Activated CD4-positive, alpha-beta T cell treated with anti-CD3 and anti-CD28 coated beads, Interleukin-2, amount 10 ng/mL, durations not matched to agents 7 days and 5 days (primary cell): ENCODE measurements at regions of chr17 and their contacts with region 1.

Region 1: DNA sequence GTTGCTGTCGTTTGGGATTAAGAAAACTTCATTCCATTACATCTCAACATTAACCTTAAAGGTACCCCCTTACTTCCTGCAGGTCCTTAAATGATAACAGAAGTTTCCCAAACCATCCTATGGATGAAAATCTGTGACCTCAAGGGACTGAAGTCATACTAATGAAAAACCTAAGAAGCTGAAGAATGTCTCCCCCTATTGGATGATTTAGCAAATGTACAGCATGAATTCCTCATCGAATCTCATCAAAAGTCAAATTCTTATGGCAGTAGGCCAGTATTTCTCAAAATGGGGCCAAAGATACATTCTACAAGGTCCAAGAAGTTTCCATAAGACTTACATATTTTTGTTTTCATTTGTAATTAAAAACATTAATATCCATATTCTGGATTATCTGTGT is 13.5 kb downstream of the SCO1 start:
- DNase-seq: no peak
- H3K4me3 Mint-ChIP-seq: no peak overlapping the region
- H3K27ac Mint-ChIP-seq: no peak overlapping the region
- H3K4me1 Mint-ChIP-seq: peaks cover 7% of the 10 kb centered on the region
- H3K27me3 Mint-ChIP-seq: no peaks in the 10 kb centered on the region

Region 2: GRCh38 chr17:10653987-10654386 is 29.9 kb before region 1 on chr17:
- CTCF ChIA-PET with region 1: no interaction called
- POLR2A ChIA-PET with region 1: interaction called, 16 read pairs
- DNase-seq: no peak
- H3K4me3 Mint-ChIP-seq: no peak overlapping the region
- H3K27ac Mint-ChIP-seq: no peak overlapping the region
- H3K4me1 Mint-ChIP-seq: peaks cover 8% of the 10 kb centered on the region
- H3K27me3 Mint-ChIP-seq: no peaks in the 10 kb centered on the region

Region 3: GRCh38 chr17:10702574-10702973 is 18.7 kb after region 1 on chr17:
- CTCF ChIA-PET with region 1: no interaction called
- POLR2A ChIA-PET with region 1: no interaction called
- DNase-seq: no peak
- H3K4me3 Mint-ChIP-seq: peak overlapping the region; percentile 20
- H3K27ac Mint-ChIP-seq: peak overlapping the region; percentile 80
- H3K4me1 Mint-ChIP-seq: peaks cover 60% of the 10 kb centered on the region
- H3K27me3 Mint-ChIP-seq: no peaks in the 10 kb centered on the region